Right cardiac atrium (tissue), 5 donors: ENCODE measurements at regions of chr4 and their contacts with region 1.

Region 1: GRCh38 chr4:105471566-105472176 is 2.2 kb downstream of the PPA2 start:
- DNase-seq: peak in 2 of 3 donors; percentile 43
- ATAC-seq: peak; percentile 48
- H3K4me3 ChIP-seq: peak overlapping the region; percentile 72
- H3K27ac ChIP-seq: peak overlapping the region; percentile 67
- H3K4me1 ChIP-seq: no peaks in the 10 kb centered on the region
- H3K27me3 ChIP-seq: no peaks in the 10 kb centered on the region

Region 2: GRCh38 chr4:105135785-105136184 is 335.9 kb before region 1 on chr4:
- intact Hi-C with region 1: loop called in 3 of 4 experiments (anchors 2 to 10 kb)
- DNase-seq: no peak
- ATAC-seq: no peak
- H3K4me3 ChIP-seq: no peak overlapping the region
- H3K27ac ChIP-seq: no peak overlapping the region
- H3K4me1 ChIP-seq: peaks cover 2% of the 10 kb centered on the region
- H3K27me3 ChIP-seq: no peaks in the 10 kb centered on the region

Region 3: DNA sequence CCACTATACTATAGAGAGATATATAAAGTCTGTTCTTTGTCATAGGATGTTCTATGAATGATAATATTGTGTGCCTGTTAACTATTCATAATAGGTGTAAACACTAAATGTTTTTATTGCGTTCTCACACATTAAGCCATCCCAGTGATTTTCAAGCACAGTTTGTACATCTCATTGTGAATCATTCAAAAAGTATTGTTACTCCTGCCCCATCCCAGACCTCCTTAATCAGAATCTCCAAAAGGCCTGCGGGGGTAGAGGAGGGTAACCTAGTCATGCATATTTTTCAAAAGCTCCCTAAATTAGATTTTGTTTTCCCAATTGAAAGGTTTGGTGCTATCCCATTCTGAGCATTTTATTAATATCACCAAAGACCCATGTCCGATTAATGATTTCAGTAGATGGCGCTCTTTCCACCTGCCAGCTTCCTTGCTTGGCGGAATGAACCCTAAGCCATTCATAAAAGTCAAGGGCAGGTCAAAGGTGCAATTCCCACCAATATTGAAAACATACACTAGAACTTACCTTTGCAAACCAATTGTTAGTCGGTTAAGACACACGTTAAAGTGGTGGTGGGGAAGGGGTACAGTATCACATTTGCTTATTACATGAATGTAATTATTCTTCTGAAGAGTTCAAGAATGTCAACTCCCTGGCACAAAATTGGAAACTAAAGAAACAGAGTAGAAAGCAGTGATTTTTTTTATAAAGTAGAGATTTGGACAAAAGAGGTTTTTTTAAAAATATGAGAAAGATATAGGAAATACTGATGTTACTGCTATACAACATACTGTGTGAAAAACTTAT is 330.8 kb before region 1 on chr4:
- intact Hi-C with region 1: loop called (anchors 2 to 10 kb)
- DNase-seq: no peak
- ATAC-seq: peak; percentile 57 to 71
- H3K4me3 ChIP-seq: no peak overlapping the region
- H3K27ac ChIP-seq: no peak overlapping the region
- H3K4me1 ChIP-seq: peaks cover under 1% of the 10 kb centered on the region
- H3K27me3 ChIP-seq: no peaks in the 10 kb centered on the region

Region 4: GRCh38 chr4:105305019-105305836 is 166.4 kb before region 1 on chr4:
- intact Hi-C with region 1: no loop called
- DNase-seq: no peak
- ATAC-seq: no peak
- H3K4me3 ChIP-seq: no peak overlapping the region
- H3K27ac ChIP-seq: no peak overlapping the region
- H3K4me1 ChIP-seq: no peaks in the 10 kb centered on the region
- H3K27me3 ChIP-seq: no peaks in the 10 kb centered on the region

Region 5: DNA sequence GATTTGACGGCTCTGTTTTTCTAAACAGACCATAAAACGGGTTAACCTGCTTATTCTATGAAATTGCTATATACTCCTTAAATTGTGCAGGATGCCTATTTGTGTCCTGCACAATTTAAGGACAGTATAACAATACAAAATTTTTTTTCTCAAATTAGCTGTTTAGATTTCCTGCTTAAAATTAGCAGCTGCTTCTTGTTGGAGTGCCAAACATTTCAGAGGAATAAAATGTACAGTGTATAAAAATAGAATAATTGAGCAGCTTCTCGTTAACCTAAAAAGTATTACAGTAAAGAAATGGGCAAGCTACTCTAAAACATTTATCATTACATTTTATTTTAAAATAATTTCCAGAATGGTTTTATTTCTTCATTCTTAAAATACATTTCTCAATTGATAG is 98.3 kb before region 1 on chr4:
- intact Hi-C with region 1: no loop called
- DNase-seq: no peak
- ATAC-seq: no peak
- H3K4me3 ChIP-seq: no peak overlapping the region
- H3K27ac ChIP-seq: no peak overlapping the region
- H3K4me1 ChIP-seq: peaks cover 1% of the 10 kb centered on the region
- H3K27me3 ChIP-seq: no peaks in the 10 kb centered on the region